Ascending aorta (tissue), 2 donors: ENCODE measurements at regions of chr1 and their contacts with region 1.

Region 1: GRCh38 chr1:32964461-32965250 is at the start of gene RNF19B:
- DNase-seq: peak; percentile 77 to 98
- H3K4me3 ChIP-seq: peak within 1 kb of the TSS; percentile 99 to 100
- H3K27ac ChIP-seq: peak within 1 kb of the TSS; percentile 93 to 99
- H3K4me1 ChIP-seq: peaks cover 0 to 22% of the 10 kb centered on the region in 2 donors
- H3K27me3 ChIP-seq: no peaks in the 10 kb centered on the region
- CTCF ChIP-seq: peak in 2 of 3 experiments; percentile 24 to 25
- total RNA-seq, gene RNF19B: 40.0 TPM

Region 2: DNA sequence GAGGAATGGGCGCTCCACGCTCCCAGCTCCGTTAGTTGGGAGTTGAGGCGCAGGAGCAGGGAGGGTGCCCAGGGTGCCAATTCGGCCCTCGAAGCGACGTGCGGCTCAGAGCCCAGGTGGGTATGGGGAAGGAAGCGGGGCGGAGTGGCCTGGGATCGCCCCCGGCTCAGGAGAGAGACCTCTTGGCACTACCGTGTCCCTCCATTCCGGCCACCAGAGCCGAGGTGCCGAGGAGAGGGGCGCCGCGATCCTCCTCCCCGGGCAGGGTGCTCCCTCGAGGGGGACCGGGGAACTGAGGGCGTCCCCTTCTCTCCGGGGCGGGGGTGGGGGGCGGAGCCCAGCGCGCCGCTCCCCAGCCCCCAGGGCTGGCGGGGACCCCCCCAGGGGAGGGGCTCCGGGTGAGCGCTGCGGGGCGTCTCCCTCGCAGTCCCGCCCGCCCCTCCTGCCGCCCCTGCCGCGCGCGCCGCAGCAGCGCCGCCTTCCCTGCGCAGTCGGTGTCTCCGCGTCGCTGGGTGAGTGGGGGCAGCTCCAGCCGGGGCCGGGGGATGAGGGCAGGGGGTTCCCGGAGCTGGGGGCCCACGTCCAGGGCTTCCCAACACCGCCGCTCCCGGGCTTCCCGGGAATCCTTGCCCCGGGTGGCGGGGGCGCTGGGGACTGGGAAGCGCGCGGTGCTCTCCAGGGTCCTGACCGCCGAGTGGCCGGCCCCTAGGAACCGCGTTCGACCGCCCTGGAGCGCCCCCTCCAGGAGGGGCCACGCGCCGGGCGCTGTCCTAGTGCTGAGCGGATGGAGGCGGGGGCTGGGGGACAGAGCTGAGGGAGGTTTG is 78.4 kb before region 1 on chr1 and contains the start of gene HPCA:
- intact Hi-C with region 1: no loop called
- DNase-seq: no peak
- H3K4me3 ChIP-seq: peak within 1 kb of the TSS in 1 of 2 donors; percentile 36
- H3K27ac ChIP-seq: no peak within 1 kb of the TSS
- H3K4me1 ChIP-seq: peaks cover 10 to 12% of the 10 kb centered on the region in 2 donors
- H3K27me3 ChIP-seq: no peaks in the 10 kb centered on the region
- CTCF ChIP-seq: peak in 2 of 3 experiments; percentile 48 to 52
- total RNA-seq, gene HPCA: not detected

Region 3: DNA sequence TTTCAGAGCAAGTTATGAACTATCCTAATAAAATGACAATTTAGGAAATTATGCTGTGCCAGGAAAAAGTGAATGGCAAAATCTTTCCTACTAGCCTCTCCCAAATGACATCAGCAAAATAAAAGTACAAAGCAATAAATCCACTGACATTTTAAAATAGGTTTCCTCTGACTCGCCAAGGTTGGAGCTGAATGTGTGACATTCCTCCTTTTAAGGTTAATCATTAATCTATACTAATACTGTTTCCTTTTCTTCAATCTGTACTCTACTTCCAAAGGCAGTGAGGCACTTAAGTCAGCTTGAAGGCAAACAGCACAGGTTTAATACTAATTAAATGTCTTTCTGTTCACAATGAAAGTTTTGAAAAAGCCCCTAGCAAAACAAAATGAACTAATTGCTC is 15.8 kb before region 1 on chr1:
- intact Hi-C with region 1: loop called (anchors 1 kb)
- DNase-seq: no peak
- H3K4me3 ChIP-seq: no peak overlapping the region
- H3K27ac ChIP-seq: peak overlapping the region; percentile 71 to 79
- H3K4me1 ChIP-seq: peaks cover 13 to 42% of the 10 kb centered on the region in 2 donors
- H3K27me3 ChIP-seq: no peaks in the 10 kb centered on the region
- CTCF ChIP-seq: no peak

Region 4: GRCh38 chr1:33007190-33008050 is 42.8 kb after region 1 on chr1:
- intact Hi-C with region 1: loop called (anchors 2 kb)
- DNase-seq: peak in 1 of 2 donors; percentile 77
- H3K4me3 ChIP-seq: no peak overlapping the region
- H3K27ac ChIP-seq: no peak overlapping the region
- H3K4me1 ChIP-seq: peaks cover under 1 to 12% of the 10 kb centered on the region in 2 donors
- H3K27me3 ChIP-seq: no peaks in the 10 kb centered on the region
- CTCF ChIP-seq: peak; percentile 21 to 53 (median 46)